Aorta (tissue), 5 donors: ENCODE measurements at regions of chr2 and their contacts with region 1.

Region 1: GRCh38 chr2:96265840-96266679 is at the starts of genes CIAO1 and TMEM127:
- DNase-seq: peak; percentile 99
- ATAC-seq: peak; percentile 99
- H3K4me3 ChIP-seq: peak within 1 kb of the TSS; percentile 57 to 72
- H3K27ac ChIP-seq: peak within 1 kb of the TSS; percentile 33 to 45
- H3K4me1 ChIP-seq: peaks cover 0 to 2% of the 10 kb centered on the region in 2 donors
- H3K27me3 ChIP-seq: no peaks in the 10 kb centered on the region
- total RNA-seq, gene CIAO1: 46.4 to 57.1 TPM
- total RNA-seq, gene TMEM127: 53.4 to 53.8 TPM

Region 2: DNA sequence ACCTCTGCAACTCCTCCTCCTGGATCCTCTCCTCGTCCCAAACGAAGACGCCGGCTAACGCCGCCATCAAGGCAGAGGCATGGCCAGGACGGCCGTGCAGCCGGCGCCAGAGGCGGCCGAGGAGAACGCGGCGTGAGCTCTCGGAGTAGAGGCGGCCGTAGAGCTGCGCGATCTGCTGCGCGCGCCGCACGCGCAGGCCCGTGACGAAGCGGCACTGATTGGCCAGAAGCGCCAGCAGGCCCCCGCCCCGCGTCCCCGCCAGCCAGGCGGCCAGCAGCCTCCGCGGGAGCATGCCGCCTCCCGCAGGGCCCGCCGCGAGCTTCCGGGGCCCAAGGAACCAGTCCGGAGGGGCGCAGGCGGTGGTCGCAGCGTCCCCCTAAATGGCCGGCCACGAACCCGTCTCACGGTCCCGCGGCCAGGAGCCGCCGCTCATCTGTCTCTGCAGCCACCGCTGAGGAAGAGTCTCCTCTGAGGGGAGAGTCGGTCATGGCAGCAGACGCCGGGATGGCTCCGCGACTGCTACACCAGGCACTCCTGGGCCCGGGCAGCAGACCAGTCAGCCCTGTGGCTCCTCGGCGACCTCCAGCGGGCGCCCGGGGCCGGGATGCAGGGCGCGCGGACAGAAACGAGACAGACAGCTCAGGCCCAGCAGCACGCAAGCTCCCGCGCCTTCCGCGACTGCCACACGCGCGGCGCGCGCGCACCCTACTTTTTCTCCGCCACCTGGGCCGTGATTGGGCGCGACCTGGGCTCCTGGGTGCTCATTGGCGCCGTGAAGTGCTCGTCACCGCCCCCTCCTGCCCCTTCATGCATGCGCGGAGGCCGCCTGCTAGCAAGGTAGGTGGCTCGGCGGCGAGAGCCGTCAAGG is 57.7 kb before region 1 on chr2 and contains the start of gene STARD7:
- intact Hi-C with region 1: loop called in 1 of 2 experiments (anchors 5 kb)
- DNase-seq: peak; percentile 99 to 100
- ATAC-seq: peak; percentile 98
- H3K4me3 ChIP-seq: peak within 1 kb of the TSS; percentile 71 to 77
- H3K27ac ChIP-seq: peak within 1 kb of the TSS; percentile 6 to 80
- H3K4me1 ChIP-seq: no peaks in the 10 kb centered on the region
- H3K27me3 ChIP-seq: no peaks in the 10 kb centered on the region
- total RNA-seq, gene STARD7: 69.3 to 72.7 TPM

Region 3: GRCh38 chr2:96305091-96305978 is 39.3 kb after region 1 on chr2 and contains the start of gene SNRNP200:
- intact Hi-C with region 1: loop called in 1 of 2 experiments (anchors 5 kb)
- DNase-seq: peak; percentile 92 to 95
- ATAC-seq: peak; percentile 97
- H3K4me3 ChIP-seq: peak within 1 kb of the TSS; percentile 53 to 74
- H3K27ac ChIP-seq: peak within 1 kb of the TSS in 1 of 2 donors; percentile 55
- H3K4me1 ChIP-seq: no peaks in the 10 kb centered on the region
- H3K27me3 ChIP-seq: no peaks in the 10 kb centered on the region
- total RNA-seq, gene SNRNP200: 85.0 to 99.7 TPM

Region 4: GRCh38 chr2:96320728-96321622 is 54.9 kb after region 1 on chr2:
- intact Hi-C with region 1: no loop called
- DNase-seq: peak; percentile 70 to 80
- ATAC-seq: peak; percentile 59
- H3K4me3 ChIP-seq: peak overlapping the region; percentile 33 to 57
- H3K27ac ChIP-seq: no peak overlapping the region
- H3K4me1 ChIP-seq: no peaks in the 10 kb centered on the region
- H3K27me3 ChIP-seq: no peaks in the 10 kb centered on the region

Region 5: DNA sequence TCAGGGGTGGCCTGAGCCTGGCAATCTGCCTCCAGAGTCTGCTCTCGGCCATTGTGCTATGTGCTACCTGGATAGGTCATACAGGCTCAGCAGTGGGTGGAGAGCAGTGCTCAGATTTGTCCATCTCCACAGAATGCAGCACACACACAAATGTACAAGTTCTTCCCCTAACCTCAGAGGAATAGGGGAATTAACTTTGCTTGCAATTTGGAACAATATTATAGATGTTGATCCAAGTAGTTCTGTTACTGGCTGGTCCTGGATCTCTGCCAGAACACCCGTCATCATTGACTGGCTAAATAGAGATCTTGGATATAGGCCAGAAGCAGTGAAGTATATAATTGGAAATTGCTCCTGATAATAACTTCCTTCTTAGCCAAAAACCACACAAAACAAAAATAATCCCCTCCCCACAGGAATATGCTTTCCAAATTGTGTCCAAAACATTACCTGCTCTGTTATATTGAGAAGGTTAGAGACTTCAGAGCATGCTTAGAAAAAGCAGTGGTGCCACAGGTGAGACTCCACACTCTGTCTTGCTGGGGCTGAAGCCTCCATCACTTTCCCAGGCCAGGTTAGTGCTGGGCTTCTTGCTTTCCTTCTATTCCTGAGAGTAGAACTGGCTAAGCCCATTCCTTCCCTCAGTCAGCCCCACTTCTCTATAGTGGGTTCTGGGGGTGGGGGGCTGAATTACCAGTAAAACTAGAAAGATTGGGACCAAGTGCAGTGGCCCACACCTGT is 108.3 kb after region 1 on chr2:
- intact Hi-C with region 1: no loop called
- DNase-seq: peak; percentile 83 to 84
- ATAC-seq: peak; percentile 52
- H3K4me3 ChIP-seq: no peak overlapping the region
- H3K27ac ChIP-seq: no peak overlapping the region
- H3K4me1 ChIP-seq: peaks cover 0 to 3% of the 10 kb centered on the region in 2 donors
- H3K27me3 ChIP-seq: no peaks in the 10 kb centered on the region